AG04449 (cell line): ENCODE measurements at regions of chr17 and their contacts with region 1.

Region 1: GRCh38 chr17:41966463-41967140 is at the start of gene CNP:
- DNase-seq: no peak
- H3K4me3 ChIP-seq: peak within 1 kb of the TSS; percentile 81
- CTCF ChIP-seq: no peak

Region 2: GRCh38 chr17:41456208-41456607 is 510.4 kb before region 1 on chr17:
- CTCF ChIA-PET with region 1: no interaction called
- POLR2A ChIA-PET with region 1: no interaction called
- DNase-seq: no peak
- H3K4me3 ChIP-seq: no peak overlapping the region
- CTCF ChIP-seq: no peak

Region 3: GRCh38 chr17:41918314-41919164 is 48.1 kb before region 1 on chr17 and contains the start of gene ACLY:
- CTCF ChIA-PET with region 1: interaction called, 13 read pairs
- POLR2A ChIA-PET with region 1: interaction called, 7 read pairs
- DNase-seq: peak; percentile 65
- H3K4me3 ChIP-seq: peak within 1 kb of the TSS; percentile 89
- CTCF ChIP-seq: no peak

Region 4: DNA sequence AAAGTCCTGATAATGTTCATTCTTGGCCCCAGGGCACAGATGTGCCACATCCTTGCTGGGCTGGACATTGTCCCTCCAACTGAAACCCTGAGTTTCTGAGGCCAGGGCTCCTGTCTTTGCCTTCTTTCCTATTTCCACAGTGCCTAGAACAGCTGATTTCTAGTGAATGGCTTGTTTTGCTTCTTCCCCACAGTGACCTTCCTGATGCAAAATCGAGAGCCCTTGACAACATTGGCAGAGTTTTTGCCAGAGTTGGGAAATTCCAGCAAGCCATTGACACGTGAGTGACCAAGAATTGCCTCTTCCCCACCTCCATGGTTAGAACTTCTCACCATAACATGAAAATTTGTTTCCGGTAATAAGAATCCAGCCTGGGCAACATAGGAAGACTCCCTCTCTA is 21.7 kb before region 1 on chr17:
- CTCF ChIA-PET with region 1: interaction called, 51 read pairs
- POLR2A ChIA-PET with region 1: no interaction called
- DNase-seq: no peak
- H3K4me3 ChIP-seq: no peak overlapping the region
- CTCF ChIP-seq: no peak

Region 5: DNA sequence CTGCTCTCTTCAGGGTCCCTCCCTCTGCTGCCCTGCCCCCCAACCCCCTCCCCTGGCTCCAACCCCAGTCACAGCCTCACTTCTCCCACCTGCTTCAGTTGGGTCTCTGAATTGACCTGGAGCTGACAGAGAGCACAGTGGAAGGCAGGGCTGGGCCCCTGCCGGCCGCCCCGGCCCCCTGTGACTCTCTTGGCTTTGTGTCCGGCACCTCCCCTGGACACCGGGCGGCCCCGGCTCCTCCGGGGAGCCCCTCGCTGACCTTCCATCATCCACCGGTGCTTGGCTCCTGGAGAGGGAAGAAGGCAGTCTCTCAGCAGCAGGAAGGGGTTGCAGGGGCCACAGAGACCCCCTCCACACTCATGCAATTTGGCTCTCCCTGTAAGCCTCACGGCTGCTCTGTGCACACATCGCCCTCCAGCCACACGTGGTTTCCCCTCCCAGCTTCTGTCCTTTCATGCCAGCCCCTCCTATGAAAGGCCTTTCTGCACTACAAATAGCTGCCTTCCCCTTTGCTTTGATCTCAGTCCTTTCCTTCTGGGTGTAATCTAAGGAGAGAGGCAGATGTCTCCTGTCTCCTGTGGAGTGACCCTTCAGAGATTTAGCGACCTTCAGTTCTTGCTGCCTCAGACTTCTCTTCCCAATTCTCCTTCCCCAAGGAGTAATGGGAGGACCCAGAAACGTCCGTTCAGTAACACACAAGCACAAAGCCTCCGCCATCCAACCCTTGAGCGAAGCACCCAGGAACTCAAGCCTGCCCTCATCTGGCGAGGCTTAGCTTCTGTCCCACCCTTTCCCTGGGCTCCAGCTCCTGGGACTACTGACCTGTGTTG is 61.6 kb after region 1 on chr17:
- CTCF ChIA-PET with region 1: interaction called, 14 read pairs
- POLR2A ChIA-PET with region 1: no interaction called
- DNase-seq: no peak
- H3K4me3 ChIP-seq: no peak overlapping the region
- CTCF ChIP-seq: peak; percentile 5

Region 6: DNA sequence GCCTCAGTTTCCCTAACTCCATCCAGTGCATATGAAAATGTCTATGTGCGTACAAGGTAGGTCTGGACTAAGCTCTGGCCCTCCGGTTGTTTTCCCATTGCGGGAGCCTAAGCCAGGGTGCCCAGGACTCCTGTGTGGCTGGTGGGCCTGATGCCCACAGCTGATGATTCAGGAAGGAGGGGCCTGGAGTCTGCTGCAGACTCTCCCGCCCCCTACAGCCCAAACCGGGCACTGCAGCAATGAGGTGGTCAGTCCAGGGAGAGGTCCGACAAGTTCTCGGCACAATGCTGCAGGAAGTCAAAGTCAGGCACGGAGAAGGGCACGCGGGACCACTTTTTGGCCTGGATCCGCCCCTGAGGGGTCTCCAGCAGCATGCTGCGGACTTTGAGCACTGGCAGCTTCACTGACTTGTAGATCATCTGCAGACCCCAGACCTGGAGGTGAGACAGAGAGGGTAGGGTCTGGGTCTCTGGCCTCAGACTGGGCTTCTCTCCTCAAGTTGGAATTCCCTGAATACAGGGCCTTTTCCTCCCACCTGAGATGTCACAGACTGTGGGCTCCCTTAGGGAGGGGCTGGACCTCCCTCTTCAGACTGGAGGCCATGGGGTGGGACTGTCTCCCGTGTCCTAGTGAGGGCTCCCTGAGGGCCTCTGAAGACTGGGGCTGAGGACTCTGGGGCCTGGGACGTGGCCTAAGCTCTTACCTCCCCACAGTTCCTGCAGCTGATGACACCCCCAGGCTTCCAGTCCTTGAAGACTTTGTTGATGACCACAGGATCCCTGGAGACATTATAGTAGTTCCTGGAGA is 135.1 kb after region 1 on chr17:
- CTCF ChIA-PET with region 1: interaction called, 17 read pairs
- POLR2A ChIA-PET with region 1: interaction called, 4 read pairs
- DNase-seq: no peak
- H3K4me3 ChIP-seq: no peak overlapping the region
- CTCF ChIP-seq: peak; percentile 77

Region 7: DNA sequence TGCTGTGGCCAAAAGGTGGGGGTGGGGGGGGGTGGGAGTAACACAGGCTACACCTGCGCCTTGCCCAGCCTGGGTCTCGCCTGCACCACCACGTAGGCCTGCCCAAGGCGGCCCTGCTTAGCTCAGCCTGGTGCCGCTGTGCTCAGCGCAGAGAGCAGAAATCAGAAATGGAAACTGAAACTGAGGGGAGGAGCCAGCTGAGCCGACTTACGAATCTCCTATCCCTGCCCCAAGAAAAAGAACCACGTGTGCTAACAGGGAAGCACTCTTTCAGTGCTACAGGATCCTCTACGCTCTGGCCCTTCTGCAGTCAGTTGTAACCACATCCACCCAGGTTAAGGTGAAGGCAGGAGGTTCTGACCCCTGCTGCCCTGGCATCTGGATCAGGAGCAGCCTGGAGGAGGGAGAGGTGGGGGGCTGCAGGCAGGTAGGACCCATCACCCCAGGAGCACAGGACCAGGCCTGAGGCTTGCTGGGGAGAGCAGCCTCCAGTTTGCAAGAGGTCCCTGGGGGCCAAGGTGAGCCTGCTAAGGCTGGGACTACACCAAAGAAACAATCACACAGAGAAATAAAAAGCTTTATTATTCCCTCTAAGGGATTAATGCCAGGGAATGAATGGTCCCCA is 146.1 kb after region 1 on chr17 and contains the start of gene DHX58:
- CTCF ChIA-PET with region 1: interaction called, 131 read pairs
- POLR2A ChIA-PET with region 1: interaction called, 7 read pairs
- DNase-seq: peak; percentile 36
- H3K4me3 ChIP-seq: peak within 1 kb of the TSS; percentile 55
- CTCF ChIP-seq: no peak

Region 8: GRCh38 chr17:42120770-42121769 is 154.5 kb after region 1 on chr17 and contains the start of gene KAT2A:
- CTCF ChIA-PET with region 1: interaction called, 131 read pairs
- POLR2A ChIA-PET with region 1: no interaction called
- DNase-seq: no peak
- H3K4me3 ChIP-seq: peak within 1 kb of the TSS; percentile 62
- CTCF ChIP-seq: no peak